Vagina (tissue), 2 donors: ENCODE measurements at regions of chr4 and their contacts with region 1.

Region 1: DNA sequence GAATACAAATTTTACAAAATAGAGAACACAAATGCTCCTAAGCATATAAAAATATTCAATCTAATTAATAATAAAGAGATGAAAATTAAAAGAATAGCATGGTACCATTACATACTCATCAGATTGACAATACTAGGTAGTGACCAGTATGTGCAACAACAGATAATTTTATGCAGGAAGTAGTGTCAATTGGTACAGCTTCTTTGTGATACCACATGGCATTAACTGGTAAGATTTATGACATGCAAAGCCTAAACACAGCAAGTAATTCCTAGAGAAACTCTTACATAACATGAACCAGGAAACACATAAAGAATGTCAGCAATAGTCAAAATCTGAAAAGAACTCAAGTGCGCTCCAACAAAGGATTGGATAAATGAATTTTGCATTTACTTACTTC is 26.3 kb downstream of the CXCL2 start:
- DNase-seq: no peak
- H3K4me3 ChIP-seq: no peak overlapping the region
- H3K27ac ChIP-seq: no peak overlapping the region
- H3K4me1 ChIP-seq: no peaks in the 10 kb centered on the region
- H3K27me3 ChIP-seq: no peaks in the 10 kb centered on the region
- CTCF ChIP-seq: no peak
- POLR2A ChIP-seq: no peak

Region 2: GRCh38 chr4:73964862-73965611 is 107.7 kb before region 1 on chr4:
- intact Hi-C with region 1: no loop called
- DNase-seq: no peak
- H3K4me3 ChIP-seq: no peak overlapping the region
- H3K27ac ChIP-seq: no peak overlapping the region
- H3K4me1 ChIP-seq: no peaks in the 10 kb centered on the region
- H3K27me3 ChIP-seq: no peaks in the 10 kb centered on the region
- CTCF ChIP-seq: no peak
- POLR2A ChIP-seq: no peak

Region 3: DNA sequence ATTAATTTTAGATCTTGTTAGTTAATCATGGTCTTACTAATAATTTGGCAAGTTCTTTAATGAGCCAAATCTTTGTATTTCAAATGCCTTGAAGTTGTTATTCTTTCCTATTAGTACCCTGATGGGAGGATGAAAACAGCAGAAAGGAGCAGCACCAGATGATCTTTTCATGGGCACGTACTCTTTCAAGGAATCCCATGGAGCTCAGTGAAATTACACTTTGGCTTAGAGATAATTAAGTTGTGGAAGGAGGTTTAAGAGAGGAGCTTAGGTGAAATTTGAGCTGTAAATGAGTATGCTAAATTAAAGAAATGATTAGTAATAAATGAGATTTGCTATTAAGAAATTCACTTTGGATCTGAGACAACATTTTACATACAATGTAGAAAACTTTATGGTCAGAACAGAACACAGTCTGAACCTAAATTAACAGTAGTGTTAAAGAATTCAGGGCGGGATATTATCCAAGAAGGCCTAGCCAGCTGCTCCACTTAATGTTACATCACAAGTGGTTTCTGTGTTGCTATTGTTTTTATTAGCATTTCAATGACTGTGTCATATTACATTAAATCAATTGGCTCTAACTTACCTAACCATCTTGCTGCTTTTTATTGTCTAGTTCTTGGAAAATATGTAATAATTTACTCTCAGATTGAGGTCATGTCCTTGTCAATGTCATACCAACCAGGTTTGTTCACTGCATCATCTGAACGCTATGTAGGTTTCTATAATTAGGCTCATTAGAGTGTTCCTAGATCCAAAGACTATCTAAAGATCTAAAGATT is 89.1 kb after region 1 on chr4:
- intact Hi-C with region 1: no loop called
- DNase-seq: no peak
- H3K4me3 ChIP-seq: no peak overlapping the region
- H3K27ac ChIP-seq: no peak overlapping the region
- H3K4me1 ChIP-seq: peaks cover 35% of the 10 kb centered on the region
- H3K27me3 ChIP-seq: no peaks in the 10 kb centered on the region
- CTCF ChIP-seq: no peak
- POLR2A ChIP-seq: no peak

Region 4: DNA sequence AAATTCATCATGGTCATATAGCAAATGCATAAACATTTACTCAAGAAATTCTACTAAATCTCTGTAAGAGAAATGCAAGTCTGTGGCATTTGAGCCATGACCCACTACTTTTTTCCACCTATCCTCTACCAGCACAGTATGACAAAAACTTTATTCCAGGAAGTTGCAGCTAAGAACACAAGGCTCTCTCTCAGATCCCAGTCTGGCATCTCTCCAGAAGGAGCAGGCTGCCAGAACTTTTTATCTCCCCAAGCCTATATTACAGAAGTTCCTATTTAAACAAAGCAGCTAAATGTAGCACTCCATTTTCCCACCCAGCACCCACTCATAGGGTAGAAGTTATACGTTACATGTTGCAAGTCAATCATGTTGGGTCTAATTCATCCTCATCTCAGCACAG is 186.2 kb after region 1 on chr4:
- intact Hi-C with region 1: loop called (anchors 10 kb)
- DNase-seq: no peak
- H3K4me3 ChIP-seq: no peak overlapping the region
- H3K27ac ChIP-seq: no peak overlapping the region
- H3K4me1 ChIP-seq: no peaks in the 10 kb centered on the region
- H3K27me3 ChIP-seq: no peaks in the 10 kb centered on the region
- CTCF ChIP-seq: no peak
- POLR2A ChIP-seq: no peak